Panc1 (cell line): ENCODE measurements at regions of chr6 and their contacts with region 1.

Region 1: DNA sequence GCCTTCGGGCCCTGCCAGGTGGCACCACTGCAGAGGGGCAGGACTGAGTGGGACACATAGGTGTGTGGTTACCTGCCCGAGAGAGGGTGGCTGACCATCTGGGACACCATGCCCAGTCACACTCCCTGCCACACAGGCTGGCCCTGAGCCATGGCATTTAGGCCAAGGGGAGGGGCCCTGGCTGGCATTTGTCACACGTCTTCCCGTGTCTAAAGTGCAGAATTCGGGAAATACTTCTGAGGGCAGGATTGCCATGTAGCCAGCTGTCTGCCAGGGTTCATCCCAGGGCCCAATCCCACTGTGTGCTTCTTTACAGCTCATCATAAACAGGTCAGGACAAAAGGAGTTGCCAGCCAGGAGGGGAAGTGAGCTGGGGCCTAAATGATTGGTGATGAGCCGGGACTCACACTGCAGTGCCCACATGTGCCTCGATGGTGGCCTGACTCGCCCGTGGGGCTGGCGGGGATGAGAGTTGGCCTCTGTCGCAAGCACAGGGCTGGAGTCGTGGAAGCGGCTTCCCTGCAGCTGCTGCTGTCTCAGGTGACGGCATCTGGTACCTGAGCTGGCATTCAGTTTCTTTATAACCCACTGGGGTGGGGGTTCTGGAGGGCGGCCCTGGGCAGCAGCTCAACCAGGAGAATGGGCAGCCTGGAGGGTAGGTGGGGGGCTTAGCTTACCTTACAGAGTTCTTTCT is 5.9 kb upstream of the UNC93A start:
- DNase-seq: no peak
- ATAC-seq: no peak
- H3K4me3 ChIP-seq: no peak overlapping the region
- H3K27ac ChIP-seq: no peak overlapping the region
- H3K4me1 ChIP-seq: no peaks in the 10 kb centered on the region
- H3K27me3 ChIP-seq: no peaks in the 10 kb centered on the region; the same call in none of the 2 replicates
- CTCF ChIP-seq: no peak

Region 2: DNA sequence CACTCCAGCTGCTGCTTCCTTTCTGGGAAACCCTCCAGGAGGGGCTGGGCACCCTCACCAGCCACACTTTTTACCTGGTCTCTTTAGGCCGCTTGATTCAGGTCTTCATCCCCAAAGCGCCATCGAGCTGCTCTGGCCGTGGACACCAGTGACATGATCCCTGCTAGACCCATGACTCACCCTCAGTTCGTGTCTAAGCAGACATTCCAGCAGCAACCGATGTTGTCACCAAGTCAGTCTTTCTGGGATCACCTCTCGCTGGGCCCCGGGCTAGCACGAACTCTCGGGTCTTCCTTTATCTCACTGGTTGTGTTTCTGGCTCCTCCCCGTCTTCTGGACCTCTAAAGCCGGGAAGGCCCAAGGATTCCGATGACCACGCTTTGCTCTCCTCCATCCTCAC is 84.4 kb before region 1 on chr6:
- CTCF ChIA-PET with region 1: no interaction called
- POLR2A ChIA-PET with region 1: no interaction called
- in situ Hi-C with region 1: no loop called
- intact Hi-C with region 1: loop called (anchors 10 kb)
- DNase-seq: no peak
- ATAC-seq: no peak
- H3K4me3 ChIP-seq: no peak overlapping the region
- H3K27ac ChIP-seq: no peak overlapping the region
- H3K4me1 ChIP-seq: 0 out of 2 replicates have a peak, but pooled peaks cover 3% of the 10 kb centered on the region
- H3K27me3 ChIP-seq: no peaks in the 10 kb centered on the region
- CTCF ChIP-seq: no peak

Region 3: GRCh38 chr6:167219967-167220512 is 65.2 kb before region 1 on chr6:
- CTCF ChIA-PET with region 1: interaction called, 7 read pairs
- POLR2A ChIA-PET with region 1: no interaction called
- in situ Hi-C with region 1: no loop called
- intact Hi-C with region 1: loop called (anchors 1 kb)
- DNase-seq: no peak
- ATAC-seq: no peak
- H3K4me3 ChIP-seq: no peak overlapping the region
- H3K27ac ChIP-seq: no peak overlapping the region
- H3K4me1 ChIP-seq: no peaks in the 10 kb centered on the region
- H3K27me3 ChIP-seq: no peaks in the 10 kb centered on the region
- CTCF ChIP-seq: no peak

Region 4: DNA sequence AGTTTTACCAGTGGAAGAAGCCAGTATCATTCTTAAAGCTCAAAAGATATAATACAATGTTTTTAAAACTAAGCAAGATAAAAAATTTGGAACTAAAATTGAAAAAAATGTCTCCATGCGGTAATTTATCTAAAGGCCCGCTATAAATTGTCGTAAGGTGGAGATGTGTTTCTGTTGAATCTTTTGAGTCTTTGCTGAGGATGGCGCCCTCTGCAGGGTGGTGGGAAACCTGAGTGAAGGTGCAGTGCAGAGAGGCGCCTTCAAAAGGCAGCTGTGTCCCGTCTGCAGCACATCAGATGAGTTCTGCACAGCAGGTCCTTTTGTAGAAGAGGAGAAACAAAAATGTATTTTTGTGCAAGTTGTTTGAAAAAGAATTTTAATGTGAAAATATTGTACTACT is 682.9 kb after region 1 on chr6:
- CTCF ChIA-PET with region 1: no interaction called
- POLR2A ChIA-PET with region 1: no interaction called
- in situ Hi-C with region 1: no loop called
- intact Hi-C with region 1: no loop called
- DNase-seq: no peak
- ATAC-seq: peak; percentile 81
- H3K4me3 ChIP-seq: no peak overlapping the region
- H3K27ac ChIP-seq: no peak overlapping the region
- H3K4me1 ChIP-seq: no peaks in the 10 kb centered on the region
- H3K27me3 ChIP-seq: no peaks in the 10 kb centered on the region
- CTCF ChIP-seq: peak; percentile 89